GM12878 (cell line): ENCODE measurements at regions of chr18 and their contacts with region 1.

Region 1: DNA sequence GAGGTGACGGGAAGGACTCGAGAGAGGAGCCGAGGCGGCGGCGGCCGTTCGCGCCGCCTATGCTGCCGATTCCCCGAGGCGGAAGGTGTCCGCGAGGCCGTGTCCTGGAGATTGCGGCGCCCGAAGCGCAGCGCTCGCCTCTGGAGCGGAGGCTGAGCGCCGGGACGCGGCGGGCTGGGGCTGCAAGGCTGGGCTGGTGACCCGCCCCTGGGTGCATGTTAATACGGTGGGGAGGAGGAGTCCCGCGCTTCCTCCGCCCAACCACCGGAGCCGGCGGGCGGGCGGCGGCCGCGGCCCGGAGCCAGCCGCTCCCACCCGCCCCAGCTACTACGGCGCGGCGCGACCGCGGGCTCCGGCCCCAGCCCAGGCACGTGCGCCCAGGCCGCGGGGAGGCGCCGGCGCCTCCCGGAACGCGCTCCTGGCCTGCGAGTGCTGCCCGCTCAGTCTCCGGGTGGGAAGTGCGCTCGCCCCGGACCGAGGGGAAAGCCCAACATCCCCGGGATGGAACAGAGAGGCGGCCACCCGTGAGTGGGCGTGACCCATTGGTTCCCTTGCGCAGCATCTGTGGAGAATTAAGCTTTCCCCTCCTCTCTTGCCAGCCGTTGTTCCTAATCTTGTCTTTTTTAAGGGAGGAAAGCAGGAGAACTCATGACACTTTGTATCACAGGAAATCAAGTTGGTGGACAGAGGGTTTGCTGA is at the start of gene DLGAP1:
- DNase-seq: no peak
- ATAC-seq: peak; percentile 85
- H3K4me3 ChIP-seq: no peak within 1 kb of the TSS
- H3K27ac ChIP-seq: no peak within 1 kb of the TSS
- H3K4me1 ChIP-seq: no peaks in the 10 kb centered on the region
- H3K27me3 ChIP-seq: no peaks in the 10 kb centered on the region; a peak in 1 of 4 replicates
- CTCF ChIP-seq: peak in 1 of 3 experiments; percentile 23; a peak in 1 of 6 replicates
- EP300 ChIP-seq: no peak
- POLR2A ChIP-seq: 0 out of 2 replicates have a peak, but pooled peaks have one; percentile 23
- RAD21 ChIP-seq: no peak
- polyA plus RNA-seq, gene DLGAP1: 0.23 to 0.60 TPM

Region 2: GRCh38 chr18:4236940-4237663 is 218.2 kb before region 1 on chr18:
- CTCF ChIA-PET with region 1: no interaction called
- POLR2A ChIA-PET with region 1: no interaction called
- RAD21 ChIA-PET with region 1: interaction called, 5 read pairs
- SMC1A ChIA-PET with region 1: interaction called, 10 read pairs
- in situ Hi-C with region 1: no loop called
- intact Hi-C with region 1: no loop called
- DNase-seq: no peak
- ATAC-seq: peak; percentile 77
- H3K4me3 ChIP-seq: no peak overlapping the region
- H3K27ac ChIP-seq: no peak overlapping the region
- H3K4me1 ChIP-seq: no peaks in the 10 kb centered on the region
- H3K27me3 ChIP-seq: no peaks in the 10 kb centered on the region
- CTCF ChIP-seq: no peak
- EP300 ChIP-seq: peak; percentile 28 to 41; a peak in 1 of 4 replicates
- POLR2A ChIP-seq: no peak
- RAD21 ChIP-seq: no peak

Region 3: GRCh38 chr18:4444306-4444705 is 11.0 kb before region 1 on chr18:
- CTCF ChIA-PET with region 1: interaction called, 5 read pairs
- POLR2A ChIA-PET with region 1: interaction called, 4 read pairs
- RAD21 ChIA-PET with region 1: interaction called, 3 read pairs
- SMC1A ChIA-PET with region 1: interaction called, 31 read pairs
- in situ Hi-C with region 1: no loop called
- intact Hi-C with region 1: no loop called
- DNase-seq: no peak
- ATAC-seq: peak; percentile 50
- H3K4me3 ChIP-seq: no peak overlapping the region
- H3K27ac ChIP-seq: no peak overlapping the region
- H3K4me1 ChIP-seq: no peaks in the 10 kb centered on the region
- H3K27me3 ChIP-seq: no peaks in the 10 kb centered on the region
- CTCF ChIP-seq: no peak
- EP300 ChIP-seq: no peak
- POLR2A ChIP-seq: no peak
- RAD21 ChIP-seq: no peak

Region 4: GRCh38 chr18:4510711-4511110 is 55.4 kb after region 1 on chr18:
- CTCF ChIA-PET with region 1: no interaction called
- POLR2A ChIA-PET with region 1: no interaction called
- RAD21 ChIA-PET with region 1: no interaction called
- SMC1A ChIA-PET with region 1: no interaction called
- in situ Hi-C with region 1: no loop called
- intact Hi-C with region 1: no loop called
- DNase-seq: no peak
- ATAC-seq: peak; percentile 23; the same call in 2 of the 3 replicates
- H3K4me3 ChIP-seq: no peak overlapping the region
- H3K27ac ChIP-seq: no peak overlapping the region
- H3K4me1 ChIP-seq: no peaks in the 10 kb centered on the region
- H3K27me3 ChIP-seq: no peaks in the 10 kb centered on the region
- CTCF ChIP-seq: no peak
- EP300 ChIP-seq: no peak
- POLR2A ChIP-seq: no peak
- RAD21 ChIP-seq: no peak

Region 5: GRCh38 chr18:5021558-5021957 is 566.3 kb after region 1 on chr18:
- CTCF ChIA-PET with region 1: interaction called, 14 read pairs
- POLR2A ChIA-PET with region 1: no interaction called
- RAD21 ChIA-PET with region 1: interaction called, 6 read pairs
- SMC1A ChIA-PET with region 1: interaction called, 7 read pairs
- in situ Hi-C with region 1: no loop called
- intact Hi-C with region 1: loop called (anchors 10 kb)
- DNase-seq: no peak
- ATAC-seq: peak; percentile 83
- H3K4me3 ChIP-seq: no peak overlapping the region
- H3K27ac ChIP-seq: no peak overlapping the region
- H3K4me1 ChIP-seq: no peaks in the 10 kb centered on the region
- H3K27me3 ChIP-seq: no peaks in the 10 kb centered on the region
- CTCF ChIP-seq: no peak
- EP300 ChIP-seq: no peak
- POLR2A ChIP-seq: no peak
- RAD21 ChIP-seq: no peak

Region 6: GRCh38 chr18:5097116-5097703 is 641.9 kb after region 1 on chr18:
- CTCF ChIA-PET with region 1: no interaction called
- POLR2A ChIA-PET with region 1: no interaction called
- RAD21 ChIA-PET with region 1: no interaction called
- SMC1A ChIA-PET with region 1: no interaction called
- in situ Hi-C with region 1: no loop called
- intact Hi-C with region 1: no loop called
- DNase-seq: no peak
- ATAC-seq: no peak
- H3K4me3 ChIP-seq: no peak overlapping the region
- H3K27ac ChIP-seq: no peak overlapping the region
- H3K4me1 ChIP-seq: no peaks in the 10 kb centered on the region
- H3K27me3 ChIP-seq: no peaks in the 10 kb centered on the region; a peak in 1 of 4 replicates
- CTCF ChIP-seq: no peak
- EP300 ChIP-seq: no peak
- POLR2A ChIP-seq: no peak
- RAD21 ChIP-seq: no peak